ENCODE measurements at regions of chr6 and their contacts with region 1.

Region 1: DNA sequence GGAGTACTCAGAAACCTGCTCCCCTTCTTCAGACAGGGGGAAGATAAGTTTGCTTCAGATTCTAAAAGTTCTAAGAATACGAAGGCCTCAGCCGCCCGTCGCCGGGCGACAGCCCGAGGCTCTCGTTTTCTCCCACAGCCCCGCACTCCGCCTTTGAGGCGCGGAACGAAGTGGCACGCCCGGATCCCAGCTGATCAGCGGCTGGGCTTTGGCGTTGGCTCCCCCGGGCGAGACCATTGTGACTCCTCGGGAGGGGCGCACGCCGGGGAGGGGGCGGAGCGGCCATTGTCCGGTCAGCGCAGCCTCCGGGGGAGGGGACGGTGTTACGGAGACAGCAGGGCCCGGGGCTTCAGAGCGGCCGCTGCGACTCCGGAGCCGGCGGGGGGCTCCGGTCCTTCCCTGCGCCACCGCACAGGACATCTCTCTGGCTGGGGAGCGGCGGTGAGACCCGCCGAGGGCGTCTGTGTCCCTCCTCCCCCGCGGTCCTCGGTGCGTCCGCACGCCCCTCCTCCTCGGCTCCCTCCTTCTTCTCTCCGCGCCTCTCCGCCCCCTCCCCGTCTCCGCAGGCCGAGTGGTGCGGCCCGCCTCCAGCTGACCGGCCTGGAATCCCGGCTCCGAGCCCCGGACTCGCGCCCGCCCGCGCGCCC is at the start of gene ZFAND3:
- H3K4me3 ChIP-seq: peak within 1 kb of the TSS; percentile 89
- H3K27ac ChIP-seq: peak within 1 kb of the TSS; percentile 95
- H3K4me1 ChIP-seq: peaks cover 23% of the 10 kb centered on the region
- CTCF ChIP-seq: peak; percentile 40; the same call in 1 of the 2 replicates

Region 2: DNA sequence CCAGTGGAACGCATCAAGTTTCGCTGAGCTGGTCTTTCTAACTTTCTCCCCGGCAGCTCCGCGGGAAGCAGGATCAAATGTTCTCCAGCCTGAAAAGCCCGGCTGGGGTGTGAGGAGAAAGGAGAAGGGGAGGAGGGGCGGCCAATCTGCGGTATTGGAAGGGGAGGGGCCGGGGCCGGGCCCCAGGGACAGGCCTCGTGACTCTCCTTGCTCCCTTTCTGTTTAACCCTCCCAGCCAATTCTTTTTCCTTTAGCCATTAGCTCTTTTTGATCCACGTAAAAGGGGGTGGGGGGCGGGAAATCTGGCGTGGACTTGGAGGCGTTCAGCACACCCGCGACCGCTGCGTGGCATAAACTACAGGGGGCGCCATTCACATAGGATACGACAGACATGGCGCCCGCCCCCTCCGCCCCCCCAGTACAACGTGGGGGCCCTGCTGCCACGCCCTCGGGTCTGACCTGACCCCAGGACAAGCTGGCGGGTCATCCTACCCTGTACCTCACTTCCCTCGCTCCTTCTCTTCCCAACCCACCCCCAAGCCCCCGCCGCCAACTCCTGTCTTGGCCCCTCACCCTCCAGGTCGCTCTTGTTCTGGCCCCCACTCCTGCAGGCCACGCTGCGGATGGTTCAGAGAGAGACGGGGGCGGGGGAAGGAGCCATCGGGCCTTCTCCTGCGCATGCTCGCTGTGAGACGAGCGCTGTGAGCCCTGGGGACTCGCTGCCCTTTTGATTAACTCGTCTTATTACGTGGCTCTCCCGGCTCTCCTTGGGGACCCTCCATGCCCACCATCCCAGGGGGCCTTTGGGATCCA is 113.9 kb before region 1 on chr6:
- CTCF ChIA-PET with region 1: interaction called, 5 read pairs
- POLR2A ChIA-PET with region 1: interaction called, 12 read pairs
- H3K4me3 ChIP-seq: peak overlapping the region; percentile 30
- H3K27ac ChIP-seq: peak overlapping the region; percentile 75
- H3K4me1 ChIP-seq: peaks cover 8% of the 10 kb centered on the region
- CTCF ChIP-seq: peak; percentile 67

Region 3: DNA sequence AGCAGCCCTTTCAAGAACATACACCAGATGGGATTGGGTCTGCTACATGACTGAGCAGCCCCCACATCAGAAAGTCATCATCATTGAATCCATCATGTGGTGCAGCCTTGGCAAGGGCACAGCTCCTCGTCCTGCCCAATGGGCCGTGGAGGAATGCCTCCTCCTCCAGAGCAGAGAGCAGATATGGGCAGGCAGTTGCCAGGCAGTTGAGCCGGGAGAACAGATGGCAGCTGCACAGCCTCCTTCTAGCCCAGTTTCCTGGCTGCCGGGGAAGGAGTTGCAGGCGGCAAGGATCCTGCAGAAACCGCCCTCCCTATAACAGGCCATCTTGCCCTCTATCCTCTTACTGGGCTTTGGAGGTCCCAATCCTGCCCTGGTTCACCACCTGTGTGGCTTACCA is 11.6 kb before region 1 on chr6:
- CTCF ChIA-PET with region 1: interaction called, 7 read pairs
- POLR2A ChIA-PET with region 1: interaction called, 18 read pairs
- H3K4me3 ChIP-seq: no peak overlapping the region
- H3K27ac ChIP-seq: no peak overlapping the region
- H3K4me1 ChIP-seq: no peaks in the 10 kb centered on the region
- CTCF ChIP-seq: no peak

Region 4: GRCh38 chr6:37831457-37831856 is 12.2 kb after region 1 on chr6:
- CTCF ChIA-PET with region 1: no interaction called
- POLR2A ChIA-PET with region 1: interaction called, 18 read pairs
- H3K4me3 ChIP-seq: no peak overlapping the region
- H3K27ac ChIP-seq: no peak overlapping the region
- H3K4me1 ChIP-seq: peaks cover 15% of the 10 kb centered on the region
- CTCF ChIP-seq: no peak

Measured in HEK293 (cell line).